ENCODE measurements at regions of chr22 and their contacts with region 1.

Region 1: GRCh38 chr22:12697441-12697840 is 2830.6 kb upstream of the OR11H1 start:
- DNase-seq: no peak
- ATAC-seq: no peak
- H3K4me3 ChIP-seq: no peak overlapping the region
- H3K27ac ChIP-seq: no peak overlapping the region
- H3K4me1 ChIP-seq: no peaks in the 10 kb centered on the region
- H3K27me3 ChIP-seq: no peaks in the 10 kb centered on the region
- CTCF ChIP-seq: no peak
- EP300 ChIP-seq: no peak
- POLR2A ChIP-seq: no peak
- RAD21 ChIP-seq: no peak

Region 2: GRCh38 chr22:11325767-11326166 is 1371.7 kb before region 1 on chr22:
- CTCF ChIA-PET with region 1: no interaction called
- POLR2A ChIA-PET with region 1: no interaction called
- in situ Hi-C with region 1: loop called (anchors 10 kb)
- intact Hi-C with region 1: no loop called
- DNase-seq: no peak
- ATAC-seq: no peak
- H3K4me3 ChIP-seq: no peak overlapping the region
- H3K27ac ChIP-seq: no peak overlapping the region
- H3K4me1 ChIP-seq: no peaks in the 10 kb centered on the region
- H3K27me3 ChIP-seq: no peaks in the 10 kb centered on the region
- CTCF ChIP-seq: no peak
- EP300 ChIP-seq: no peak
- POLR2A ChIP-seq: no peak
- RAD21 ChIP-seq: no peak